ENCODE measurements at regions of chr12 and their contacts with region 1.

Region 1: DNA sequence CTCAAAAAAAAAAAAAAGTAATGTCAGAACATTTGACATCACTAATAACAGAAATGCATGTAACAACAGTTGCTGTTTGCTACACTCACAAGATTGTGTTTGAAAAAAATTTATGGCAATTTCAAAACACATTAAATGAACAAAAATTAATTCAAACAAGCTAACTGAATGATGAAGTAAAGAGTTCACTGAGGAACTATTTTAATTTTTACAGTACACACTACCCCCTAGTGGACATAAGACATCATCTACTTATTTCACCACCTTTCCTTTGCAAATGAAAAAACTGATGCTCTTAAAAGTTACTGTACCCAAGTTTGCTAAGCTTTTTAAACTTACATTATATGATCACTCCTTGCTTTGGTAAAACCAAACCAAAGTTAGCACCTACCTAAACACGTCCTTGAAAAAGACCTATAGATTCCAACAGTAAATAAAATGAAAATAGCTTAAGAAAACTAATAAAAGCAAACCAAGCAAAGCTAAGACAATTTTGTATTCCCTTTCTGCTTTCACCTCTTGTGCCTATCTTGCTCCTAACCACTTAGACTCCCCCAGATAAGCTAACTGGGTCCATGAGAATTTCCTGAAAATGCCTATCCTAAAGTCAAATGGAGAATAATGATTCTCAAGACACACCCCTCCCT is 22.2 kb downstream of the UBE2N start:
- DNase-seq: peak in 6 of 9 donors; percentile 36 to 68 (median 54)
- ATAC-seq: peak; percentile 88
- H3K4me3 ChIP-seq: no peak overlapping the region
- H3K4me3 Mint-ChIP-seq: peak overlapping the region in 2 of 10 donors; percentile 10 to 34
- H3K27ac ChIP-seq: no peak overlapping the region
- H3K27ac Mint-ChIP-seq: peak overlapping the region in 8 of 9 donors; percentile 19 to 92 (median 54)
- H3K4me1 ChIP-seq: peaks cover 0 to 16% of the 10 kb centered on the region in 2 donors
- H3K4me1 Mint-ChIP-seq: peaks cover 45 to 95% (median 88%) of the 10 kb centered on the region in 7 donors
- H3K27me3 ChIP-seq: no peaks in the 10 kb centered on the region
- H3K27me3 Mint-ChIP-seq: no peaks in the 10 kb centered on the region

Region 2: GRCh38 chr12:92987362-92987761 is 432.1 kb before region 1 on chr12:
- CTCF ChIA-PET with region 1: interaction called, 23 read pairs
- POLR2A ChIA-PET with region 1: interaction called, 5 read pairs
- intact Hi-C with region 1: loop called (anchors 1 kb)
- DNase-seq: peak in 7 of 9 donors; percentile 41 to 66 (median 56)
- ATAC-seq: peak; percentile 81
- H3K4me3 ChIP-seq: no peak overlapping the region
- H3K4me3 Mint-ChIP-seq: peak overlapping the region in 9 of 10 donors; percentile 18 to 80 (median 65)
- H3K27ac ChIP-seq: no peak overlapping the region
- H3K27ac Mint-ChIP-seq: peak overlapping the region in 5 of 9 donors; percentile 35 to 68 (median 59)
- H3K4me1 ChIP-seq: peaks cover 0 to 8% of the 10 kb centered on the region in 2 donors
- H3K4me1 Mint-ChIP-seq: peaks cover 5 to 13% (median 12%) of the 10 kb centered on the region in 7 donors
- H3K27me3 ChIP-seq: no peaks in the 10 kb centered on the region
- H3K27me3 Mint-ChIP-seq: peaks cover 0 to 5% (median 0%) of the 10 kb centered on the region in 5 donors

Region 3: GRCh38 chr12:93098077-93098476 is 321.4 kb before region 1 on chr12:
- CTCF ChIA-PET with region 1: interaction called, 12 read pairs
- POLR2A ChIA-PET with region 1: no interaction called
- intact Hi-C with region 1: loop called (anchors 1 to 2 kb)
- DNase-seq: peak; percentile 33 to 75 (median 62)
- ATAC-seq: peak; percentile 96
- H3K4me3 ChIP-seq: no peak overlapping the region
- H3K4me3 Mint-ChIP-seq: no peak overlapping the region
- H3K27ac ChIP-seq: no peak overlapping the region
- H3K27ac Mint-ChIP-seq: peak overlapping the region in 1 of 9 donors; percentile 2
- H3K4me1 ChIP-seq: no peaks in the 10 kb centered on the region
- H3K4me1 Mint-ChIP-seq: peaks cover 4 to 9% (median 5%) of the 10 kb centered on the region in 7 donors
- H3K27me3 ChIP-seq: no peaks in the 10 kb centered on the region
- H3K27me3 Mint-ChIP-seq: no peaks in the 10 kb centered on the region

Region 4: DNA sequence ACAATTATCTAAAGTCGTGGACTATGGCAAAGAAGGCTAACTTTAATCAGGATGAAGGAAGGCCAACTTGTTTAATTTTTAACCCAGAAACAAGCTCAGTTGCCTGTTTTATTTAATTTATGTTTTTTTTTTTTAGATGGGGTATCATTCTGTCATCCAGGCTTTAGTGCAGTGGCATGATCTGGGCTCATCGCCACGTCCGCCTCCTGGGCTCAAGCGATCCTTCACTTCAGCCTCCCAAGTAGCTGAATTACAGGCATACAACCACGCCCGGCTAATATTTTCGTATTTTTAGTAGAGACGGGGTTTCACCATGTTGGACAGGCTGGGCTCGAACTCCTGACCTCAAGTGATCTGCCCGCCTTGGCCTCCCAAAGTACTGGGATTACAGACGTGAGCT is 22.1 kb before region 1 on chr12:
- CTCF ChIA-PET with region 1: interaction called, 11 read pairs
- POLR2A ChIA-PET with region 1: no interaction called
- intact Hi-C with region 1: no loop called
- DNase-seq: no peak
- ATAC-seq: no peak
- H3K4me3 ChIP-seq: no peak overlapping the region
- H3K4me3 Mint-ChIP-seq: no peak overlapping the region
- H3K27ac ChIP-seq: no peak overlapping the region
- H3K27ac Mint-ChIP-seq: peak overlapping the region in 1 of 9 donors; percentile 25
- H3K4me1 ChIP-seq: no peaks in the 10 kb centered on the region
- H3K4me1 Mint-ChIP-seq: peaks cover 0 to 8% (median 5%) of the 10 kb centered on the region in 7 donors
- H3K27me3 ChIP-seq: no peaks in the 10 kb centered on the region
- H3K27me3 Mint-ChIP-seq: no peaks in the 10 kb centered on the region

Region 5: DNA sequence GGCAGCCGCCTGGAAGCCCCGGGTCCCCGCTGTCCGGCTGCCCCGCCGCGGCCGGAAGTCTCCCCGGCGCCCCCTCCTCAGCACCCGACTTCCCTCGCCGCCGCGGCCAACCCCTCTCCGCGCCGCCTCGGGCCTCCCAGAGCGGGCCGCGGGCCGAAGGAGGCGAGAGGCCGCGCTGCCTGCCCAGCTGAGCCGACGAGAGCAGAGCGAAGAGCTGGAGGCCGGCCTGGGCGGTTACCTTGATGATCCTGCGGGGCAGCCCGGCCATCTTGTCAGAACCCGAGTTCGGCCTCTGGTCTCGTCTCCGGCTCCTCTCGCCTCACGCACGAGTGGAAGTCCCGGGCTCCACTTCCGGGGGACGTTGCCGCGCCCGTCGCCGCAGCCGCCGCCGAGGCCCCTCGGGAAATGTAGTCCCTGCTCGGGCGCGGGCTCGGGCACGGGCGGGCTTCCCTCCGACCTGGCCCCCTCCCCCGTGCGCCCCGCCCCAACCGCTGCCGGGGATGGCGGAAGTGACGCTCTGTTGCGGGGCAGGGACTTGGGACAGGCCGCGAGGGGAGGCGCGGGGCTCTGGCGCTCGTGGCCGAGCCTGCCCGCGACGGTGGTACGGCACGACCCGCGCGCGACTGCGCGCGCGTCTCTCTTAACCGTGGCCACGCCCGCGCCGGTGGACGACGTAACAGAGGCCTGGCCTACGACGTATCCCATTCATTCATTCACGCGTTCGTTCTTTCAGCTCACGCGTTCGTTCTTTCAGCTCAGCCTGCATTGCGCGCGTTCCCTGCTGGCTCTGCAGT is 22.3 kb after region 1 on chr12 and contains the start of gene UBE2N:
- CTCF ChIA-PET with region 1: interaction called, 11 read pairs
- POLR2A ChIA-PET with region 1: interaction called, 4 read pairs
- intact Hi-C with region 1: loop called (anchors 1 to 2 kb)
- DNase-seq: peak; percentile 96 to 98 (median 97)
- ATAC-seq: peak; percentile 95
- H3K4me3 ChIP-seq: peak within 1 kb of the TSS; percentile 66
- H3K4me3 Mint-ChIP-seq: peak within 1 kb of the TSS; percentile 89 to 100 (median 97)
- H3K27ac ChIP-seq: peak within 1 kb of the TSS; percentile 98
- H3K27ac Mint-ChIP-seq: peak within 1 kb of the TSS; percentile 96 to 100 (median 98)
- H3K4me1 ChIP-seq: peaks cover 35 to 48% of the 10 kb centered on the region in 2 donors
- H3K4me1 Mint-ChIP-seq: peaks cover 44 to 54% (median 49%) of the 10 kb centered on the region in 7 donors
- H3K27me3 ChIP-seq: no peaks in the 10 kb centered on the region
- H3K27me3 Mint-ChIP-seq: no peaks in the 10 kb centered on the region
- total RNA-seq, gene UBE2N: 76.6 to 180 (median 77.5) TPM

Region 6: GRCh38 chr12:93699271-93700145 is 280.0 kb after region 1 on chr12:
- CTCF ChIA-PET with region 1: no interaction called
- POLR2A ChIA-PET with region 1: no interaction called
- intact Hi-C with region 1: no loop called
- DNase-seq: no peak
- ATAC-seq: no peak
- H3K4me3 ChIP-seq: no peak overlapping the region
- H3K4me3 Mint-ChIP-seq: no peak overlapping the region
- H3K27ac ChIP-seq: no peak overlapping the region
- H3K27ac Mint-ChIP-seq: peak overlapping the region in 1 of 9 donors; percentile 1
- H3K4me1 ChIP-seq: no peaks in the 10 kb centered on the region
- H3K4me1 Mint-ChIP-seq: peaks cover 9 to 45% (median 30%) of the 10 kb centered on the region in 7 donors
- H3K27me3 ChIP-seq: no peaks in the 10 kb centered on the region
- H3K27me3 Mint-ChIP-seq: no peaks in the 10 kb centered on the region

Measured in naive thymus-derived CD4-positive, alpha-beta T cell (primary cell).